Head of caudate nucleus (tissue), 42 donors: ENCODE measurements at regions of chr14 and their contacts with region 1.

Region 1: GRCh38 chr14:57268161-57269069 is at the starts of genes AP5M1 and EXOC5:
- DNase-seq: peak; percentile 88 to 98 (median 94)

Region 2: GRCh38 chr14:56579345-56580220 is 688.8 kb before region 1 on chr14 and contains the start of gene TMEM260:
- intact Hi-C with region 1: loop called (anchors 10 kb)
- DNase-seq: peak; percentile 75 to 95 (median 89)

Region 3: GRCh38 chr14:56933478-56933877 is 334.9 kb before region 1 on chr14:
- intact Hi-C with region 1: no loop called
- DNase-seq: no peak

Region 4: GRCh38 chr14:57153276-57153675 is 115.1 kb before region 1 on chr14:
- intact Hi-C with region 1: no loop called
- DNase-seq: no peak

Region 5: GRCh38 chr14:57502586-57503254 is 234.3 kb after region 1 on chr14:
- intact Hi-C with region 1: no loop called
- DNase-seq: no peak